ENCODE measurements at regions of chr7 and their contacts with region 1.

Region 1: DNA sequence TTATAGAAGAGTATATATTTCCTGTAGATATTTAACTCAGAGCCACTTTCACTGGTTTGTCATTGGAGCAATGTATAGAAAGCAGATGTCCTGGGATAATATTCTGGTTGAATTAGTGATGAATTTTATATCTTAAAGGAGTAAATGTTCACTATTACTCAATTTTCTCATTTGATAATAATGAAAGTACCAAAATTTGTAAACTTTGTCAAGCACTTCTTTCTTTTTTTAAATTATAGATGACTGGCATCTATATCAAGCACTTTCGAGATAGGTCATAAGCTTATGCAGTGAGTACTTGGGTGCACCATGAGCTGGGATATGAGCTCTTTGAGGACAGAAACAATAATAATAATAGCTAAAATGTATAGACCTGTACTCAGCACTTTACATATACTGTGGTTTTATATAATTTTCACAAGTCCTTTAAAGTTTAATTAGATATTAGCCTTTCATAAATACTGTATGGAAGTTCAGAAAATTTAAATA is 11.3 kb downstream of the RSBN1L start:
- DNase-seq: no peak
- ATAC-seq: no peak
- H3K4me3 ChIP-seq: no peak overlapping the region
- H3K4me3 Mint-ChIP-seq: peak overlapping the region in 1 of 3 donors; percentile 2
- H3K27ac ChIP-seq: no peak overlapping the region
- H3K27ac Mint-ChIP-seq: no peak overlapping the region
- H3K4me1 ChIP-seq: peaks cover 9 to 28% of the 10 kb centered on the region in 2 experiments
- H3K4me1 Mint-ChIP-seq: peaks cover 65 to 74% (median 68%) of the 10 kb centered on the region in 3 donors
- H3K27me3 ChIP-seq: no peaks in the 10 kb centered on the region
- H3K27me3 Mint-ChIP-seq: no peaks in the 10 kb centered on the region

Region 2: DNA sequence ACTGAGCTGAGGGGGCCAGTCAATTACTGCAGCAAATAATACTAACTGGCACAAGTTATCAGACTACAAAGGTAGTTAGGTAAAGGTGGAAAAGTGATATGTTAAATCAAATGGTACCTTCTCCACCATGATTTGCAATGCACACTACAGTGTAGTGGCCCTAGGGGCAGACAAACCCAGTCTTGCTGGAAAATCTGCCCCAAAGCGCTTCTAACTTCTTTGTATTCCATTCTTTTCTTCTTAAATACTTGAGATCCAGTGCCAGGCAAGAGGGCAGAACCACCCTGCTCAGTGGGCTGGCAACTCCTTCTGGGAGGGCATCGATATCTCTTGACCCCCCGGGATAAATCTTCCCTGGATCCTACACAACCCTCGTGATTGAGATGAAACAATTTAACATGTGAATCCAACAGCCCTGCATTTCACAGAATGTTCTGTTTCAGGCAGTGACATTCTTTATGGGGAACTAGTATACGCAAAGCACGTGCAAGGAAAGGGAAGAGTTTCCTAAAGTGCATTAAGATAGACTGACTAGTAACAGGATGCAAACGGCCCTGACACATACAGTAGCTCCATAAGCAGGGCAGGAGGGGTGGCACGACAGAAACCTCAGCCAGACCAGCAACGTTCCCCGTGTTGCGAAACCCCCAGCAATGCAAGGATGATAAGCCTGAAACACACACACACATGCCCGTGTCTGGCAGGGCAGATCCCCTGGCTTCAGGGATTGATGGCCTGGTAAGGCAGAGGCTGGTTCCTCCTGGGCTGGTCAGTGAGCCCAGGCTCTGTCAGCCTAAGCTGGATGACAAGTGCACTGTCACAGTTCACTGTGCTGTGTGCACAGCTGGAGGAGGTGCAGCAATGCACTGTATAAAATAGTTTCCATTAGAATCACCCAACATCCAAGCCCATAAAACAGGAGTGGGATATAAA is 380.6 kb before region 1 on chr7:
- CTCF ChIA-PET with region 1: no interaction called
- POLR2A ChIA-PET with region 1: no interaction called
- DNase-seq: peak in 1 of 35 experiments; percentile 14
- ATAC-seq: no peak
- H3K4me3 ChIP-seq: no peak overlapping the region
- H3K4me3 Mint-ChIP-seq: peak overlapping the region in 1 of 3 donors; percentile 53
- H3K27ac ChIP-seq: no peak overlapping the region
- H3K27ac Mint-ChIP-seq: no peak overlapping the region
- H3K4me1 ChIP-seq: peaks cover 29% of the 10 kb centered on the region in 2 experiments
- H3K4me1 Mint-ChIP-seq: peaks cover 39 to 46% (median 39%) of the 10 kb centered on the region in 3 donors
- H3K27me3 ChIP-seq: no peaks in the 10 kb centered on the region
- H3K27me3 Mint-ChIP-seq: no peaks in the 10 kb centered on the region

Region 3: DNA sequence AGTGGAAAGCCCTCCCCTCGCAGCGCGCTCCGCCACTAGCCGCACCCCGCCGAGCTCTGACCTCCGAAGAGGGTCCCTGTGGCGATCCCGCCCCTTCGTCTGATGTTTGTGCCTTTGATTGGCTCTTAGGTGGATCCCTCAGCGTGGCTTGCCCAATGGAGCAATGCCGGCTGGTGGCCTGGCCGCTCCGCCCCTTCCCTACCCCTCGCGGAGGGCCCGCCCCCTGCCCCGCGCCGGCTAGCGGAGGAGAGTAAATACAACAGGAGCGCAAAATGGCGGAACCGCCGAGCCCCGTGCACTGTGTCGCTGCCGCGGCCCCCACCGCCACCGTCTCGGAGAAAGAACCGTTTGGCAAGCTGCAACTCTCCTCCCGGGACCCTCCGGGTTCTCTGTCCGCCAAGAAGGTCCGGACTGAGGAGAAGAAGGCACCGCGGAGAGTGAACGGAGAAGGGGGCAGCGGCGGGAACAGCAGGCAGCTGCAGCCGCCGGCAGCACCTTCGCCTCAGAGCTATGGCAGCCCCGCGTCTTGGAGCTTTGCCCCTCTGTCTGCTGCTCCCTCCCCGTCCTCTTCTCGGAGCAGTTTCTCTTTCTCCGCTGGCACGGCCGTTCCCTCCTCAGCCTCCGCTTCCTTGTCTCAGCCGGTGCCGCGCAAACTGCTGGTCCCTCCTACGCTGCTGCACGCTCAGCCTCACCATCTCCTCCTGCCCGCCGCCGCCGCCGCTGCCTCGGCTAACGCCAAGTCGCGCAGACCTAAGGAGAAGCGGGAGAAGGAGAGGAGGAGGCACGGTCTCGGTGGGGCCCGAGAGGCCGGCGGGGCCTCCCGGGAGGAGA is 11.1 kb before region 1 on chr7 and contains the start of gene RSBN1L:
- CTCF ChIA-PET with region 1: interaction called, 3 to 7 read pairs
- POLR2A ChIA-PET with region 1: interaction called, 4 to 12 read pairs
- DNase-seq: peak; percentile 95 to 99 (median 98)
- ATAC-seq: peak; percentile 94 to 95 (median 95)
- H3K4me3 ChIP-seq: peak within 1 kb of the TSS; percentile 98 to 99
- H3K4me3 Mint-ChIP-seq: peak within 1 kb of the TSS; percentile 91 to 99 (median 96)
- H3K27ac ChIP-seq: peak within 1 kb of the TSS; percentile 92
- H3K27ac Mint-ChIP-seq: peak within 1 kb of the TSS; percentile 95
- H3K4me1 ChIP-seq: peaks cover 21 to 22% of the 10 kb centered on the region in 2 experiments
- H3K4me1 Mint-ChIP-seq: peaks cover 51 to 67% (median 61%) of the 10 kb centered on the region in 3 donors
- H3K27me3 ChIP-seq: no peaks in the 10 kb centered on the region
- H3K27me3 Mint-ChIP-seq: no peaks in the 10 kb centered on the region
- total RNA-seq, gene RSBN1L: 27.1 to 35.9 (median 32.4) TPM

Region 4: DNA sequence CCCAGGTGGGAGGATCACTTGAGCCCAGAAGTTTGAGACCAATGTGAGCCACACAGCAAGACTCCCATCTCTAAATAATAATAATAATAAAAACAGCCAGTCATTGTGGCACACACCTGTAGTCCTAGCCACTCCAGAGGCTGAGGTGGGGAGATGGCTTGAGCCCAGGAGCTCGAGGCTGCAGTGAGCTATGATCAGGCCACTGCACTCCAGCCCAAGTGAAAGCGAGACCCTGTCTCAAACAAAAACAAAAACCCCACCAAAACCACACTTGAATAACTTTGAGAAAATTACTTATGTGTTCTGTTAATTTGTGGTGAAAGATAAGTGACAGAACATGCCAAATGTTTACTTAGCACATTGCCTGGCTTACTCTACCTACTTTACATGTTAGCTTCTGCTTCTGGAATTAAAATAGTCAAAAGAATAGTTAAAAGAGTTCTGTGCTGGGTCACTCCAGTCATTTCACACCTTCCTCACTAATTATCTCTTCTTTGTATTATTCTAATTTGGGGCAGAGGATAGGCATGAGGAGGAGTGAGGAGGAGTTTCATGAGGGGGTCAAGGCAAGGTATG is 80.9 kb after region 1 on chr7:
- CTCF ChIA-PET with region 1: no interaction called
- POLR2A ChIA-PET with region 1: no interaction called
- DNase-seq: no peak
- ATAC-seq: no peak
- H3K4me3 ChIP-seq: no peak overlapping the region
- H3K4me3 Mint-ChIP-seq: no peak overlapping the region
- H3K27ac ChIP-seq: no peak overlapping the region
- H3K27ac Mint-ChIP-seq: peak overlapping the region; percentile 18 to 48
- H3K4me1 ChIP-seq: no peaks in the 10 kb centered on the region
- H3K4me1 Mint-ChIP-seq: peaks cover 0 to 6% (median 0%) of the 10 kb centered on the region in 3 donors
- H3K27me3 ChIP-seq: no peaks in the 10 kb centered on the region
- H3K27me3 Mint-ChIP-seq: no peaks in the 10 kb centered on the region